ENCODE measurements at regions of chr5 and their contacts with region 1.

Region 1: DNA sequence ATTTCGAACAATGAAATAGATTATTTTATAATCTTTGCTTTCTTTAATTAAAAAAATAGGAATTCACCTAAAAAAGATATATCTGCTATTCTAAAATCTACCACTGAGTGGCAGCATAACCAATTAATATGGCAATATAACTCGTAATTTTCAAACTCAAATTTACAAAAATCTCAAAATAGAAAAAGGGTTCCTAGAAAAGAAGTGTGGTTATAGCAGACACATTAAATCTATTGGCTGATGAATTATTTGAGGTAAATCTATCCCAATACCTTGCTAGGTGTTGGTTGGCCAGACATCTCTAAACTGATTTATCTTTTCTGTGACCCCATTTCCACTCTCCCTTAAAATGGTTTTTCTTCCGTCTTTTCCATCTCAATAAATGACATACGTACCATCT is 30.2 kb upstream of the NRG2 start:
- DNase-seq: peak; percentile 29 to 60 (median 48)
- H3K4me3 ChIP-seq: no peak overlapping the region
- H3K27ac ChIP-seq: no peak overlapping the region
- H3K4me1 ChIP-seq: no peaks in the 10 kb centered on the region
- H3K27me3 ChIP-seq: peaks cover 0 to 12% (median 8%) of the 10 kb centered on the region in 5 experiments

Region 2: GRCh38 chr5:139482050-139482889 is 591.0 kb before region 1 on chr5 and contains the start of gene STING1:
- CTCF ChIA-PET with region 1: no interaction called
- POLR2A ChIA-PET with region 1: no interaction called
- DNase-seq: peak; percentile 86 to 93 (median 92)
- H3K4me3 ChIP-seq: peak within 1 kb of the TSS; percentile 40 to 89 (median 79)
- H3K27ac ChIP-seq: peak within 1 kb of the TSS; percentile 81 to 91
- H3K4me1 ChIP-seq: peaks cover 12 to 71% (median 59%) of the 10 kb centered on the region in 4 experiments
- H3K27me3 ChIP-seq: no peaks in the 10 kb centered on the region

Region 3: DNA sequence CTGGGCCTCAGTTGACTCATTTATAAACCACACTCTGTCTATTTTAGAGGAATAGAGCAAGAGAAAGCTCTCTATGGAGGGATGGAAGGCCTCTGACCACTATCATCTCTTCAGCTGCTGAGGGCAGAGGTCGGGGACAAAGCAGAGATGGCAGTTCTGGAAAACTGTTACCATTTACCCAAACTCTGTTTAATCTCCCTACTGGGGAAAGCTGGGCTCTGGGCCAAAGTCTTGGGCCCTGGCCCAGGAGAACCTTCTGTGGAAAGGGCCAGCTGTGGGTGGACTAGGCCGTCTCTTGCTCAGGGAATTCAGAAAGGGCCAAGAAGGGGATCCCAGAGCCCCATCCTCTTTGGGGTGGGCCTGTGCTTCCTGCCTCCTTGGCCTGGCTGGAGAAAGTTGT is 177.6 kb before region 1 on chr5:
- CTCF ChIA-PET with region 1: no interaction called
- POLR2A ChIA-PET with region 1: no interaction called
- DNase-seq: no peak
- H3K4me3 ChIP-seq: no peak overlapping the region
- H3K27ac ChIP-seq: no peak overlapping the region
- H3K4me1 ChIP-seq: no peaks in the 10 kb centered on the region
- H3K27me3 ChIP-seq: peaks cover 0 to 28% (median 12%) of the 10 kb centered on the region in 5 experiments

Region 4: GRCh38 chr5:140107312-140108083 is 34.2 kb after region 1 on chr5:
- CTCF ChIA-PET with region 1: interaction called, 19 read pairs
- POLR2A ChIA-PET with region 1: interaction called, 3 read pairs
- DNase-seq: peak; percentile 93 to 97 (median 95)
- H3K4me3 ChIP-seq: peak overlapping the region; percentile 51 to 86 (median 67)
- H3K27ac ChIP-seq: peak overlapping the region; percentile 53 to 91
- H3K4me1 ChIP-seq: peaks cover 3 to 40% (median 32%) of the 10 kb centered on the region in 4 experiments
- H3K27me3 ChIP-seq: peaks cover 17 to 40% (median 28%) of the 10 kb centered on the region in 5 experiments

Region 5: DNA sequence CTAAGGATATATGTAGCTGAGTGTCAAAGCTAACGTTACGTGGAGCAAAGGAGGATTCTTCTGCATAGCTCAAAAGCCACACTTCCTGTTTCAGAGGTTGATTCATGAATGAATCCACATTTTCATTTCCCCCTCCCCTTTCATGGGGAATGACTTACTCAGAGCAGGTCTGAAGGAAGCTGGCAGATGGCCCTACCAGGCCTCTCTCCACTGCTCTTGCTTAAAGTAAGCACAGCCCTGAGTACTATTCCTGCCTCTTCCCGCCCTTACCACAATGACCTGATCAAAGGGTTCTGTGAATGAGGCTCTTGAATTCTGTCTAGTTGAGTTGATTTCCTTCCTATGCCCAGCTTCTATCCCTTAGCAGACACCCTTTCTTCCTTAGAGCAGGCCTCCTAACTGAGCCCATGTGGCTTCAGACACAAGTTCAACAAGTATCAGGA is 58.7 kb after region 1 on chr5:
- CTCF ChIA-PET with region 1: interaction called, 23 read pairs
- POLR2A ChIA-PET with region 1: no interaction called
- DNase-seq: peak in 2 of 3 donors; percentile 69 to 70
- H3K4me3 ChIP-seq: no peak overlapping the region
- H3K27ac ChIP-seq: no peak overlapping the region
- H3K4me1 ChIP-seq: peaks cover 0 to 9% (median 8%) of the 10 kb centered on the region in 4 experiments
- H3K27me3 ChIP-seq: peaks cover 0 to 2% (median 0%) of the 10 kb centered on the region in 5 experiments

Region 6: DNA sequence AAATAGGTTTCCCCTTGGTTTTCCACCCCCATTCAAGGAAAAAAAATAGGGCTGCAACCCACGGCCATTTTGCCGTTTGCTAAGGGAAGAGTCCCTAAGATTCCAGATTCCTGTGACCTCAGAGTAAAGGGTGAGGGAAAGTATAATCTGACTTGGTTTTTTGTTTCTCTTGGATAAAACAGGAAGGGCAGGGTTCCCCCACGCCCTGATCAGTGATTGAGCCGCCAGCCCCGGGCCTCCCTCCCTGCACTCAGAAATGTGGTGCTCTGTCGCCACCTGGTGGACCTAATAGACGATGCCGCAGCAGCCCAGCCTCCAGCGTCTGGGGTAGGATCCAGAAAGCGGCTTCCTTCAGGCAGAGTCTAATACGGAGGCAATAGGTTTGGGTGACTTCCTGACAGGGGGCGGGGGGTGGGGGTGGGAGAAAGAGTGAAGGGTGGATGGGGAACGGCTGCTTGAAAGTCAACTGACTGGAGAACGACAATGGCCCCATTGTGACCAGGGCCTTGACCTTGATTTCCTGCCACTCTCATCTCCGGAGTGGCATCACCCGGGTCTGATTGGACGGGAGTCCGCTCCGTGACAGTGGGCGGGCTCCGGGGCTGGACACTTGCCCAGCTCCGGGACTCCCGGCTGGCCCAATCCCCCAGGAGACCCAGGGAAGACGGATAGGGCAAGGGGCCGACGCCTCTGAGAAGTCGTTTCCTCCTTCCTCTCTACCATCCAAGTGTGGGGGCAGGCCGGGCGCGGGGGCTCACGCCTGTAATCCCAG is 83.9 kb after region 1 on chr5:
- CTCF ChIA-PET with region 1: interaction called, 142 read pairs
- POLR2A ChIA-PET with region 1: interaction called, 3 read pairs
- DNase-seq: peak; percentile 81 to 91 (median 87)
- H3K4me3 ChIP-seq: peak overlapping the region in 3 of 7 experiments; percentile 50 to 69 (median 55)
- H3K27ac ChIP-seq: no peak overlapping the region
- H3K4me1 ChIP-seq: peaks cover 0 to 17% (median 10%) of the 10 kb centered on the region in 4 experiments
- H3K27me3 ChIP-seq: peaks cover 0 to 7% (median 0%) of the 10 kb centered on the region in 5 experiments

Region 7: DNA sequence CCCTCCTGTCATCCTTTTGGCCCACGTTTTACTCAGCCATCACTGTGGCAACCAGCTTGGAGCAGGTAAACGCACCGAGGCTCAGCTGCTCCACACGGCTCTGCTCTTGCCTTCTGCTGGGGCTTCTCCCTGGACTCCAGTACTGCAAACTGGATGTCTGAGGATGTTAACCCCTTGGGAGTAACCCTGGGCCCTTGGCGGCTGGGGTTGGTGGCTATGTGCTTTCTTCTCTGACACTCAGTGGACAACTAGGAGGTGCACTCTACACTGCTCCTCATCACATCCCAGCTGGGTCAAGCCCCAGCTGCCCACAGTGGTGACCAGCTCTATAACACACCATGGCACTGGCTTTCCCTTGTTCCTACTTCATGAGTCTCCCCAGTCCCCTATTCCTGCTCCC is 89.5 kb after region 1 on chr5:
- CTCF ChIA-PET with region 1: interaction called, 142 read pairs
- POLR2A ChIA-PET with region 1: interaction called, 3 read pairs
- DNase-seq: no peak
- H3K4me3 ChIP-seq: no peak overlapping the region
- H3K27ac ChIP-seq: no peak overlapping the region
- H3K4me1 ChIP-seq: no peaks in the 10 kb centered on the region
- H3K27me3 ChIP-seq: peaks cover 0 to 7% (median 0%) of the 10 kb centered on the region in 5 experiments

Region 8: DNA sequence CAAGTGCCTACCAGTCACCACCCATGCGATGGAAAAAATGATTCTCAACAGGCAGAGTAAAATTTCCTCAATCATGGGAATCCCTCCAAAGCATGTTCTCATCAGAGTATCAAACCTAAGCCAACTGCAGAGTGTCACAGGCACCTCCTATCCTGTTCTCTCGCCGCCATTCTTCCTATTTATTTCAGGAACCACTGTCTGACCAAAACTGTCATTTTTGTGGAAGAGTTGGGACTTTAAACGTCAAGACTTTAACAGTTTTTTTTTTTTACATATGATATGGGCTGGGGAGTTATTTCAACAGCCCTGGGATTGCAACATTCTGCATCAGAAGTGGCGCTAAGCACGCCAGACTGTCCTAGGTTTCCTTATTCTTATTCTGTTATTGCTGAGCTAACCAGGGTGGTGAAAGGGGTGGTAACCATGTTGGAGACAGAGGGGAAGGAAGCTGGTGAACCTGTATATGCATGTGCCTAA is 200.1 kb after region 1 on chr5:
- CTCF ChIA-PET with region 1: no interaction called
- POLR2A ChIA-PET with region 1: no interaction called
- DNase-seq: peak; percentile 27 to 70 (median 68)
- H3K4me3 ChIP-seq: peak overlapping the region in 2 of 7 experiments; percentile 28 to 33
- H3K27ac ChIP-seq: no peak overlapping the region
- H3K4me1 ChIP-seq: peaks cover 4 to 27% (median 7%) of the 10 kb centered on the region in 4 experiments
- H3K27me3 ChIP-seq: no peaks in the 10 kb centered on the region